ENCODE measurements at regions of chr3 and their contacts with region 1.

Region 1: DNA sequence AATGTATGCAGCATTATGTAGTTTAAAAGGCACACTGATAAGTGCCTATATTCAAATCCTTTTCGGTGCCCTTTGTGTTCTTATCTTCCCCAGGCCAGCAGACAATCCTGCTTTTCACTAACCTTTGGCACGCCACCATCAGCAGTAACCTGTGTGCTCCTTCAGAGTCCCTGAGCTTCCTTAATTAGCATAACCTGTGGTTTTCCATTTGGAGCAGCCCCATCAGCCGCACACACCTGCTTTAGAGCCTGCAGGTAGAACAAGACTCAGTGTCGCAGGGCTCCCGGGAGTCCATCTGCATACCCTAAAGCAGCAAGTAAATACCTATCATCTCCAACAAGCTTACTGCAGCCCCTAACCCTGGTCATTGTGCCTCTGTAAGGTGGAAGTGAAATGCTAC is 755.1 kb downstream of the ROBO2 start:
- DNase-seq: no peak
- ATAC-seq: no peak
- H3K4me3 ChIP-seq: no peak overlapping the region
- H3K27ac ChIP-seq: no peak overlapping the region
- H3K4me1 ChIP-seq: no peaks in the 10 kb centered on the region
- H3K27me3 ChIP-seq: no peaks in the 10 kb centered on the region
- CTCF ChIP-seq: no peak

Region 2: DNA sequence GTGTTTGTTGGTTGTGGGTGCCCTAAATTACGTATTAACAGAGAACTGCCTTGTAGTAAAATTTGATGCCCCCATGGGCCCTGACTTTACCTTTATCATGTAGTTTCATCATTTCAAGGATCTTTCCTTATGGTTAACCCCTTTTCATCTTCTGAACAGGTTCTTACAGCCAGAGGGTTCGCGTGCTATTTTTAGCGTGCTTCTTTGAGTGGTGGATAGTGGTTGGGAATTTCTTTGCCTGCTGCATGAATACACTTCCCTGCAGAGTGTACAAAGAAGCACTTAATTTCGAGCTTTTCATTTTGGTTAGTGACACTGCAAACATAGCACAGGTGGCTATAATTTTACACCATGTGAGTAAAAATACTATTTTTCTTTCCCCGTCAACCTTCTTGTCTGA is 523.3 kb before region 1 on chr3:
- CTCF ChIA-PET with region 1: no interaction called
- POLR2A ChIA-PET with region 1: no interaction called
- intact Hi-C with region 1: loop called (anchors 10 kb)
- DNase-seq: no peak
- ATAC-seq: no peak
- H3K4me3 ChIP-seq: no peak overlapping the region
- H3K27ac ChIP-seq: no peak overlapping the region
- H3K4me1 ChIP-seq: no peaks in the 10 kb centered on the region
- H3K27me3 ChIP-seq: peaks cover 76% of the 10 kb centered on the region
- CTCF ChIP-seq: no peak

Region 3: DNA sequence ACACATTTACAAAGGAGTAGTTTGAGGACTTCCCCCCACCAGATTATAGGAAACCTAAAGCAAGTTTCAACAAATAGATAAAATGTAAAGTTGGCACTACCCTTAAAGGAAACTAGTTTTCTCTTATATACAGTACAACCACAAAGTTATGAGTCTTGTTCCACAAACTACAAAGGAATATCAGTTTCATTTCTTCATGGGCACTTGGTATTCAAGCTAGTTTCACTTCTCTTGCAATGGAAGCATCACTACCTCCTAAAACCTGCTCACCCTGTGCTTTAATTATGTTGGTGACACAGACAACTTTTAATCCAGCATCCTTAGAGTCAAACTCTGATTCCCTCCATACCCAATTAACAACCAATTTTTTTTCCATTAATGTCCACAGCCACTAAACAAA is 48.1 kb before region 1 on chr3:
- CTCF ChIA-PET with region 1: no interaction called
- POLR2A ChIA-PET with region 1: no interaction called
- intact Hi-C with region 1: no loop called
- DNase-seq: no peak
- ATAC-seq: no peak
- H3K4me3 ChIP-seq: no peak overlapping the region
- H3K27ac ChIP-seq: no peak overlapping the region
- H3K4me1 ChIP-seq: no peaks in the 10 kb centered on the region
- H3K27me3 ChIP-seq: no peaks in the 10 kb centered on the region
- CTCF ChIP-seq: no peak

Region 4: GRCh38 chr3:77906102-77906709 is 111.2 kb after region 1 on chr3:
- CTCF ChIA-PET with region 1: no interaction called
- POLR2A ChIA-PET with region 1: no interaction called
- intact Hi-C with region 1: no loop called
- DNase-seq: peak; percentile 96
- ATAC-seq: peak; percentile 95
- H3K4me3 ChIP-seq: no peak overlapping the region
- H3K27ac ChIP-seq: peak overlapping the region; percentile 95
- H3K4me1 ChIP-seq: peaks cover 24% of the 10 kb centered on the region
- H3K27me3 ChIP-seq: no peaks in the 10 kb centered on the region
- CTCF ChIP-seq: no peak; the same call in 1 of the 2 replicates